ENCODE measurements at regions of chr10 and their contacts with region 1.

Region 1: GRCh38 chr10:59181668-59182067 is 5.2 kb downstream of the PHYHIPL start:
- DNase-seq: no peak
- H3K4me3 ChIP-seq: no peak overlapping the region
- H3K27ac ChIP-seq: no peak overlapping the region
- H3K4me1 ChIP-seq: no peaks in the 10 kb centered on the region
- H3K27me3 ChIP-seq: peaks cover 0 to 13% (median 9%) of the 10 kb centered on the region in 4 experiments; a peak in 6 of 7 replicates
- CTCF ChIP-seq: peak in 2 of 3 experiments; percentile 63 to 65; a peak in 3 of 4 replicates
- EP300 ChIP-seq: no peak
- POLR2A ChIP-seq: no peak
- RAD21 ChIP-seq: peak; percentile 81 to 83

Region 2: DNA sequence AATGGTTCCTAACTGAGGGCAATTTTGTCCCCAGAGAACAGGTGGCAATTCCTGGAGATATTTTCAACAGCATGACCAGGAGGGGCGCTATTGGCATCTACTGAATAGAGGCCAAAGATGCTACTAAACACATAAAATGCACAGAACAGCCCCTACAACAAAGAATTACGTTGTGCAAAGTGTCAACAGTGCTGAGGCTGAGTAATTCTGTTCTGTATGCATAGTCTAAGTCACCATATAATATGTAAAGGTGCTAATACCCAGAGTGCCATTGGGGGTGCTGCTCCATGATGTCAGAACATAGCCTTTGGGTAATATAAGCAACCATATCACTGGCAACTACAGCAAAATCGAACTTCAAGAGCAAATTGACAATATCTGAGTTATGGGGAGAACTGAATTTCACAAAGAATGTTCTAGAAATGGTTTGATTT is 218.6 kb before region 1 on chr10:
- CTCF ChIA-PET with region 1: interaction called, 12 read pairs
- POLR2A ChIA-PET with region 1: interaction called, 3 read pairs
- DNase-seq: peak in 1 of 2 experiments; percentile 68
- H3K4me3 ChIP-seq: no peak overlapping the region
- H3K27ac ChIP-seq: no peak overlapping the region
- H3K4me1 ChIP-seq: peaks cover 4 to 20% (median 13%) of the 10 kb centered on the region in 4 experiments; a peak in 6 of 7 replicates
- H3K27me3 ChIP-seq: peaks cover 11 to 51% (median 31%) of the 10 kb centered on the region in 4 experiments
- CTCF ChIP-seq: peak in 2 of 3 experiments; percentile 60 to 75; a peak in 3 of 4 replicates
- EP300 ChIP-seq: no peak
- POLR2A ChIP-seq: no peak
- RAD21 ChIP-seq: peak; percentile 48 to 65